ENCODE measurements at regions of chr6 and their contacts with region 1.

Region 1: GRCh38 chr6:34055223-34055933 is 90.5 kb downstream of the GRM4 start:
- DNase-seq: peak; percentile 72
- H3K4me3 Mint-ChIP-seq: no peak overlapping the region
- H3K27ac Mint-ChIP-seq: no peak overlapping the region
- H3K4me1 Mint-ChIP-seq: no peaks in the 10 kb centered on the region
- H3K27me3 Mint-ChIP-seq: peaks cover 44% of the 10 kb centered on the region

Region 2: DNA sequence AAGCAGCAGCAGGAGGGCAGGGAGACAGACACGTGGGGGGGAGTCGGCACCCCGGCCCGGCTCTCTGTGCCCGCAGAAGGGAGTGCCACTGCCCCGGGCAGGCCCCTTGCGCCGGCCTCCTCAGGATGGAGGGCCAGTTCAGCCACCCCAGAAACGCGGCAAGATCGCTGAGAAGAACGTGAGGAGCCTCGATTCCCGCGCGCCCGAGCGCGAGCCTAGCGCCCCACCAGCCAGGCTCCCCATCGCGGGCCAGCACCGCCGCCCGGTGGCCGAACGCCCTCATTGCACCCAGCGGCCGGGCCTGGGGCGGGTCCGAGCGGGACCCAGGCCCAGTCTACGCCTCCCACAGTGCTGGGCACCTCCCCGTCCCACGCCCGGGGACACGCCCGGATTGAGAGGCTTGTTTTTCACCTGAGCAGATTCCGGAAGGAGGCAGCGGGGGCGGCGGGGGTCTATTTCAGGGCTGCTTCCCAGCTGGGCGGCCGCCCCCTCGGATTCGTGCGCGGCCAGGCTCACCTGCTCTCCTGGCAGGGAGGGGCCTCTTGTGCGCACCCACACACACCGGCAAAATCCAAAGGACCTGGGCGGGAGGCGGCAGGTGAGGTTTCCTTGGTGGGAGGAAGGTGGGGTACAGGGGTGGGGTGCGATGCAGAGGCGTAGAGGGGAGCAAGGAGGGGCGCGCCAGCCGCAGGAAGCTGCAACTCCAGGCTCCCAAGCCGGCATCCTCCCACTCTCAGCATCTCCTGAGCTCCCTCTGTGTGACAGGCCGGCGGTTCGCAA is 99.5 kb after region 1 on chr6:
- CTCF ChIA-PET with region 1: interaction called, 33 read pairs
- DNase-seq: peak; percentile 73
- H3K4me3 Mint-ChIP-seq: no peak overlapping the region
- H3K27ac Mint-ChIP-seq: no peak overlapping the region
- H3K4me1 Mint-ChIP-seq: peaks cover 3% of the 10 kb centered on the region
- H3K27me3 Mint-ChIP-seq: peaks cover 97% of the 10 kb centered on the region